K562 (cell line): ENCODE measurements at regions of chr6 and their contacts with region 1.

Region 1: DNA sequence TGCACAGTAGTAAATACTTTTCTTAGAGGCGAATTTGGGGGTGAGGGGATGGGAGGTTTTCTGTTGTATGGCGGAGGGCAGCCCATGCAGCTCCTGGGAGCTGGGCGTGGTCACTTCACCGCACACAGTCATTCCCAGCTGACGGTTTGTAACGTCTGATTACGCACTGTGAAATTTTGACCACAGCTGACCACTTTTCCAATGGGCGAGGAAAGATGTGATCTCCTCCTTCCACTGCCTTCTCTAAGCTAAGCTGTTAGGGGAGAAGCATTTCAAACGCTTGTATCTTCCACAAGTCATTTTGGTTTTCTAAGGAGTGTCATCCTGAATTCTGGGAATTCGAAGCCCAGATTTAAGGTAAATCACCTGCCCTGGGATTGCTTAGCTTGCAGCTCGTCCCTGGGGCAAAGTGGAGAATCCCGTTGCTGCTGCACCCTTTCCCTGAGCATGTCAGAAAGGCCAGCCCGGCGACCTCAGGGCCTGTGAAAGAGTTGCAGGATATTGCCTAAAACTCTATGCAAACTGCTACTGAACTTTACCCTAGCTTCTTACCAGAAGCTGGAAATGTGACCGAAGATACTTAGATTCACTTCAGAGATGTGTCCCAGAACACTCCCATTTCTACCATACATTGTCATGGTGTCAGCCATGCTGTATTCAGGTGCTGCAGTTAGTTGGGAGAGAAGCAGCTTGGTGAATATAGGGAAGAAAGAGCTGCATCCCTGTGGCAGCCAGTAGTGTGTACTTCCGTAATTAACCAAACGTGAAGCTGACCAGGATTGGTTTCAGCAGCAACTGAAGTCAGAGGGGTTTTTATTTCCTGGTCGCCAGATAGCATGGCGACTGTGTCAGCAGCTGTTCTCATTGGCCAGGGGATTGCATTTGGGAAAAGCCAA is 58.9 kb downstream of the RREB1 start:
- DNase-seq: peak; percentile 82 to 93 (median 84)
- ATAC-seq: peak; percentile 70
- H3K4me3 ChIP-seq: peak overlapping the region; percentile 6; the same call in 1 of the 2 replicates
- H3K27ac ChIP-seq: peak overlapping the region; percentile 88
- H3K4me1 ChIP-seq: peaks cover 78 to 94% of the 10 kb centered on the region in 2 experiments
- H3K27me3 ChIP-seq: no peaks in the 10 kb centered on the region
- CTCF ChIP-seq: no peak
- EP300 ChIP-seq: peak; percentile 95
- POLR2A ChIP-seq: peak; percentile 17; the same call in 1 of the 2 replicates
- RAD21 ChIP-seq: peak in 1 of 2 experiments; percentile 14; a peak in 1 of 4 replicates

Region 2: GRCh38 chr6:5453546-5453945 is 1713.1 kb before region 1 on chr6:
- CTCF ChIA-PET with region 1: no interaction called
- POLR2A ChIA-PET with region 1: no interaction called
- in situ Hi-C with region 1: no loop called
- intact Hi-C with region 1: no loop called
- DNase-seq: no peak
- ATAC-seq: no peak
- H3K4me3 ChIP-seq: no peak overlapping the region
- H3K27ac ChIP-seq: no peak overlapping the region
- H3K4me1 ChIP-seq: no peaks in the 10 kb centered on the region; a peak in 1 of 5 replicates
- H3K27me3 ChIP-seq: no peaks in the 10 kb centered on the region
- CTCF ChIP-seq: no peak
- EP300 ChIP-seq: no peak
- POLR2A ChIP-seq: no peak
- RAD21 ChIP-seq: no peak

Region 3: GRCh38 chr6:6712258-6712999 is 454.2 kb before region 1 on chr6:
- CTCF ChIA-PET with region 1: no interaction called
- POLR2A ChIA-PET with region 1: no interaction called
- in situ Hi-C with region 1: no loop called
- intact Hi-C with region 1: loop called (anchors 5 kb)
- DNase-seq: peak; percentile 68 to 92 (median 82)
- ATAC-seq: peak; percentile 92
- H3K4me3 ChIP-seq: no peak overlapping the region
- H3K27ac ChIP-seq: peak overlapping the region; percentile 23
- H3K4me1 ChIP-seq: peaks cover 28 to 49% of the 10 kb centered on the region in 2 experiments
- H3K27me3 ChIP-seq: no peaks in the 10 kb centered on the region
- CTCF ChIP-seq: peak; percentile 47 to 71 (median 61)
- EP300 ChIP-seq: peak; percentile 89
- POLR2A ChIP-seq: no peak
- RAD21 ChIP-seq: peak; percentile 80 to 82

Region 4: DNA sequence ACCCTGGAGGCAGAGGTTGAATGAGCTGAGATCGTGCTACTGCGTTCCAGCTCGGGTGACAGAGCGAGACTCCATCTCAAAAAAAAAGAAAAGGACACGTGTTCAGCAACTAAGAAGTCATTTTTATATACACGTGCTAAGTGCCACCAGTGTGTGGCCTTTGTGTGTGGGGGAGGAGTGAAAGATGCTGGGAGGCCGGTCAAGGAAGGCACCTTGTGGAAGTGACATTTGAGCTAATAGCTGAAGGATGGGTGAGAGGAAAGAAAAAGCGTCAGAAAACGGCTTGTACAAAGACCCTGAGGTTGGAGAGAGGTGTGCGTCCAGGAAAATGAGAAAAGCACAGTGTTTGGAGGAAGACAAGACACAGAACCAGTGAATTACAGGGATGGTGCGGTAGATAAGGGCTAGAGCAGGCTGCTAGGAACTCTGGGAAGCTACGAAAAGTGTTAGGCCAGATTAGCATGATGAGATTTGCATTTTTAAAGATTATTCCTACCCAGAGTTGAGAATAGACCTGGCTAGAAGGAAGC is 47.3 kb before region 1 on chr6:
- CTCF ChIA-PET with region 1: no interaction called
- POLR2A ChIA-PET with region 1: interaction called, 3 read pairs
- in situ Hi-C with region 1: no loop called
- intact Hi-C with region 1: loop called (anchors 2 kb)
- DNase-seq: peak; percentile 60 to 86 (median 72)
- ATAC-seq: peak; percentile 82
- H3K4me3 ChIP-seq: peak overlapping the region; percentile 2; the same call in 1 of the 2 replicates
- H3K27ac ChIP-seq: peak overlapping the region; percentile 68
- H3K4me1 ChIP-seq: peaks cover 38 to 45% of the 10 kb centered on the region in 2 experiments
- H3K27me3 ChIP-seq: no peaks in the 10 kb centered on the region
- CTCF ChIP-seq: no peak
- EP300 ChIP-seq: peak; percentile 66; the same call in 1 of the 2 replicates
- POLR2A ChIP-seq: peak; percentile 76
- RAD21 ChIP-seq: no peak

Region 5: GRCh38 chr6:7145885-7146828 is 20.5 kb before region 1 on chr6:
- CTCF ChIA-PET with region 1: no interaction called
- POLR2A ChIA-PET with region 1: interaction called, 18 read pairs
- in situ Hi-C with region 1: no loop called
- intact Hi-C with region 1: loop called (anchors 1 kb)
- DNase-seq: peak in 2 of 4 experiments; percentile 63 to 70
- ATAC-seq: peak; percentile 38
- H3K4me3 ChIP-seq: no peak overlapping the region
- H3K27ac ChIP-seq: peak overlapping the region; percentile 92
- H3K4me1 ChIP-seq: peaks cover 60 to 89% of the 10 kb centered on the region in 2 experiments
- H3K27me3 ChIP-seq: no peaks in the 10 kb centered on the region
- CTCF ChIP-seq: 0 out of 6 replicates have a peak, but pooled peaks of 1 of the 3 experiments have one; percentile 5
- EP300 ChIP-seq: no peak; the same call in 1 of the 2 replicates
- POLR2A ChIP-seq: peak; percentile 56
- RAD21 ChIP-seq: no peak; a peak in 1 of 4 replicates

Region 6: DNA sequence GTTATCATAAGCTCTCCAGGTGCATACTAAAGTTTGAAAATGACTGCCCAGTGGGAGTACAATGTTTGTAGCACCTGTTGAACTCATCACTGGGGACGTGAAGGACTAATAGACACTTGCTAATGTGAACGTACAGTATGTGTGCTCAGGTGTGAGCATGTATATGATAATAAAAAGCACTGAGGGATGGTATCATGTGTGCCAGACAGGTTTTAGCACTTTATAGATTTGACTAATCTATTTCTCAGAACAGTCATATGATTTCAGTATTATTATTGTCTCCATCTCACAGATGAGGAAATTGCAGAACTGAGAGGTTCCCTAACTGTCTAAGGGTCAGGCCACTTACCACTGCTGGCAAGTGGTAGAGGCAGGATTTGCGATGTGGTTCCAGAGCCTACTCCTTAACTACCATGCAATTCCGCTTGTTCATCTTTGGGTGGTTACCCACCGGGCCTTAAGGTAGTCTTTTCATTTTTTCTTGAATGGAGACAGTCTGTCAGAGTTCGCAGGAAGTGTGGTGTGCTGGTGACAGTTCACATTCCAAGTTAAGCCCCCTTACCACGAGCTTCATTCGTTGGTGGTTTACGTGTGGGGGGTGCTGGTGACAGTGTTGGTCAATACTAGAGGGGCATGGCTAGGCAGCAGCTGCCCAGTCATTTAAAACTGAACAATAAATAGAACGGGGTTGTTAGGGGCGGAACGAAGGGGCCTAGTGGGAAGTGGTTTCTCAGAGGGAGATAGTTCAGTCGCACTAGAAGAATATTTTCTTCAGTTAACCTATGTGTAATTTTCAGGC is 12.1 kb before region 1 on chr6:
- CTCF ChIA-PET with region 1: no interaction called
- POLR2A ChIA-PET with region 1: interaction called, 18 read pairs
- in situ Hi-C with region 1: no loop called
- intact Hi-C with region 1: no loop called
- DNase-seq: no peak
- ATAC-seq: no peak
- H3K4me3 ChIP-seq: no peak overlapping the region
- H3K27ac ChIP-seq: no peak overlapping the region
- H3K4me1 ChIP-seq: peaks cover 31 to 70% of the 10 kb centered on the region in 2 experiments
- H3K27me3 ChIP-seq: no peaks in the 10 kb centered on the region
- CTCF ChIP-seq: no peak
- EP300 ChIP-seq: no peak
- POLR2A ChIP-seq: no peak
- RAD21 ChIP-seq: no peak

Region 7: GRCh38 chr6:7201688-7202541 is 35.3 kb after region 1 on chr6:
- CTCF ChIA-PET with region 1: no interaction called
- POLR2A ChIA-PET with region 1: interaction called, 8 read pairs
- in situ Hi-C with region 1: no loop called
- intact Hi-C with region 1: loop called (anchors 1 kb)
- DNase-seq: peak; percentile 86 to 94 (median 91)
- ATAC-seq: peak; percentile 80
- H3K4me3 ChIP-seq: peak overlapping the region; percentile 49
- H3K27ac ChIP-seq: peak overlapping the region; percentile 96
- H3K4me1 ChIP-seq: peaks cover 11 to 35% of the 10 kb centered on the region in 2 experiments; a peak in 4 of 5 replicates
- H3K27me3 ChIP-seq: no peaks in the 10 kb centered on the region
- CTCF ChIP-seq: no peak
- EP300 ChIP-seq: peak; percentile 87
- POLR2A ChIP-seq: peak; percentile 92
- RAD21 ChIP-seq: peak; percentile 19 to 43; a peak in 2 of 4 replicates